ENCODE measurements at regions of chr7 and their contacts with region 1.

Region 1: GRCh38 chr7:143104832-143105241 is 27.0 kb upstream of the PIP start:
- DNase-seq: no peak
- H3K4me3 ChIP-seq: no peak overlapping the region
- H3K27ac ChIP-seq: no peak overlapping the region
- H3K4me1 ChIP-seq: no peaks in the 10 kb centered on the region
- H3K27me3 ChIP-seq: peaks cover 10% of the 10 kb centered on the region
- CTCF ChIP-seq: no peak

Region 2: GRCh38 chr7:143126140-143126539 is 21.3 kb after region 1 on chr7:
- CTCF ChIA-PET with region 1: no interaction called
- POLR2A ChIA-PET with region 1: no interaction called
- intact Hi-C with region 1: no loop called
- DNase-seq: peak in 1 of 2 experiments; percentile 67
- H3K4me3 ChIP-seq: no peak overlapping the region
- H3K27ac ChIP-seq: no peak overlapping the region
- H3K4me1 ChIP-seq: 0 out of 2 replicates have a peak, but pooled peaks cover 10% of the 10 kb centered on the region
- H3K27me3 ChIP-seq: no peaks in the 10 kb centered on the region
- CTCF ChIP-seq: no peak

Region 3: DNA sequence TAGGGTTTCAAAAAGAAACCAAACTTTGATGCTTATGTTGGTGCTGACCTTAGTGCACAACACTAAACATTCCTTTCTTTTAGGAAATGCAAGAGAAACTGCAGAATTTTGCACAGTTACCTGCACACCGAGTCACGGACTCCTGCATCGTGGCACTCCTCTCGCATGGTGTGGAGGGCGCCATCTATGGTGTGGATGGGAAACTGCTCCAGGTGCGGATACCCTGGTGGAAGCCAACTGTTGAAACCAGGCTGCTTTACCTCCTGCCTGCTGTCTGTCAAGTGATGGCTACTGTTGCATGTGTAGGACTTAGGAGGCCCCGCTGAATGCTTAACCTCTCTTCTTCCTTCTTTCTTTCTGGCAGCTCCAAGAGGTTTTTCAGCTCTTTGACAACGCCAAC is 195.0 kb after region 1 on chr7:
- CTCF ChIA-PET with region 1: no interaction called
- POLR2A ChIA-PET with region 1: no interaction called
- intact Hi-C with region 1: no loop called
- DNase-seq: peak in 1 of 2 experiments; percentile 49
- H3K4me3 ChIP-seq: no peak overlapping the region
- H3K27ac ChIP-seq: no peak overlapping the region
- H3K4me1 ChIP-seq: no peaks in the 10 kb centered on the region
- H3K27me3 ChIP-seq: no peaks in the 10 kb centered on the region
- CTCF ChIP-seq: peak; percentile 82

Region 4: DNA sequence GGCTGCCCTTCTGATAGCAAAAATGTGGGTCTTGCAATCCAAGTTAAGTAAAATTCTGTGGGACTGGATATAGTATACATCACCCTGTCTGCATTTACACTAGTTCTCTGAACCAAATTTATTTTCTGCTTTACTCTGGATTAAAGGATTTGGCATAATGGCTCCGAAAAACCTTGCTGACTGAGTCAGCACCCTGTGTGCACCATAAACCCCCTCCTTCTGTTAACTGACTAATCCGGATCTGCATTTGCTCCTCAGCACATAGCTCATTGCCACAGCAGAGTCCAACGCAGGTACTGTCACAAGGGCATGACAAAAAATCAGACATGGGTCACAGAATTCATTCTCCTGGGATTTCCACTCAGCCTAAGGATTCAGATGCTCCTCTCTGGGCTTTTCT is 945.3 kb after region 1 on chr7:
- CTCF ChIA-PET with region 1: no interaction called
- POLR2A ChIA-PET with region 1: no interaction called
- intact Hi-C with region 1: loop called (anchors 5 kb)
- DNase-seq: no peak
- H3K4me3 ChIP-seq: no peak overlapping the region
- H3K27ac ChIP-seq: no peak overlapping the region
- H3K4me1 ChIP-seq: no peaks in the 10 kb centered on the region
- H3K27me3 ChIP-seq: no peaks in the 10 kb centered on the region
- CTCF ChIP-seq: no peak